ENCODE measurements at regions of chr11 and their contacts with region 1.

Region 1: GRCh38 chr11:123478352-123478987 is 48.4 kb downstream of the GRAMD1B start:
- ATAC-seq: peak; percentile 52 to 88 (median 80)
- H3K4me3 ChIP-seq: no peak overlapping the region
- H3K27ac ChIP-seq: no peak overlapping the region
- H3K4me1 ChIP-seq: peaks cover 0 to 3% of the 10 kb centered on the region in 2 donors

Region 2: GRCh38 chr11:123103326-123103980 is 375.0 kb before region 1 on chr11:
- in situ Hi-C with region 1: loop called in 5 of 9 experiments (anchors 25 kb)
- ATAC-seq: peak; percentile 71 to 99 (median 84)
- H3K4me3 ChIP-seq: no peak overlapping the region
- H3K27ac ChIP-seq: no peak overlapping the region
- H3K4me1 ChIP-seq: peaks cover 0 to 10% of the 10 kb centered on the region in 2 donors

Region 3: GRCh38 chr11:123286761-123287160 is 191.7 kb before region 1 on chr11:
- in situ Hi-C with region 1: loop called in 2 of 9 experiments (anchors 25 kb)
- ATAC-seq: peak in 4 of 8 experiments; percentile 61 to 100 (median 90)
- H3K4me3 ChIP-seq: no peak overlapping the region
- H3K27ac ChIP-seq: no peak overlapping the region
- H3K4me1 ChIP-seq: no peaks in the 10 kb centered on the region

Region 4: DNA sequence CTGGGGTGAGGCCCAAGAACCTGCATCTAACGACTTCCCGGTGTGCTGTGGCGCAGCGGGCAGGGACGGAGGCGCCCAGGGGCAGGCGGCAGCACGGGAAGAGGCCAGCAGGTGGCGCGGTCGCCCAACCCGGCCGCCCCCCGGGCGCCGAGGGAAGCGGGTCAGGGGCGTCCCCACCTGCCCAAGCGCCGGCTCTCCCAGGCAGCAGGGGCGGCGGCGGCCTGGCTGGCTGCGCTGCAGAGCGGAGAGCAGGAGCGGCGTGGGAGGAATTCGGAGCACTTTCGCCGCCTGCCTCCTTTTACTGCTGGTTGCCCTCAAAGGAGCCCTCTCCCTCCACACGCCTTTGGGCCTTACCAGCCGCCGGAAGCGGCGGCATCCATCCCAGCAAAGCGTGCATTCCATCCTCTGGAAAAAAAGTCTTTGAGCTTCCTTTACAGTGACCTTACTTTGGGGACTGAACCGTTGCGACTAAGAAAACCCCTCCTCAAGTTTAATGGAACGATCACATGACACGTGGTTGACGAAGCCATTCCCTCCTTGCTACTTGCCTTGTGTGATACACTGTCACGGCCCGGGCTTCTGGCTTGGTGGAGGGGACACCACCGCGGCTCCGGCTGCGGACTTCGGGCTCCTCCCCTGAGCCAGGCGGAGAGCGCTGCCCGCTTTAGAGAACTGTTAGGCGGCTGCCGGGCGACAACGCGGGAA is 176.6 kb before region 1 on chr11:
- in situ Hi-C with region 1: loop called in 6 of 9 experiments (anchors 10 to 25 kb)
- ATAC-seq: peak; percentile 90 to 97 (median 92)
- H3K4me3 ChIP-seq: peak overlapping the region; percentile 24 to 38 (median 24)
- H3K27ac ChIP-seq: no peak overlapping the region
- H3K4me1 ChIP-seq: peaks cover 2 to 5% of the 10 kb centered on the region in 2 donors

Region 5: GRCh38 chr11:123601136-123601535 is 122.7 kb after region 1 on chr11:
- in situ Hi-C with region 1: no loop called
- ATAC-seq: peak in 2 of 8 experiments; percentile 52 to 77
- H3K4me3 ChIP-seq: no peak overlapping the region
- H3K27ac ChIP-seq: no peak overlapping the region
- H3K4me1 ChIP-seq: no peaks in the 10 kb centered on the region

Measured in motor neuron (in vitro differentiated cells).